ENCODE measurements at regions of chr20 and their contacts with region 1.

Region 1: DNA sequence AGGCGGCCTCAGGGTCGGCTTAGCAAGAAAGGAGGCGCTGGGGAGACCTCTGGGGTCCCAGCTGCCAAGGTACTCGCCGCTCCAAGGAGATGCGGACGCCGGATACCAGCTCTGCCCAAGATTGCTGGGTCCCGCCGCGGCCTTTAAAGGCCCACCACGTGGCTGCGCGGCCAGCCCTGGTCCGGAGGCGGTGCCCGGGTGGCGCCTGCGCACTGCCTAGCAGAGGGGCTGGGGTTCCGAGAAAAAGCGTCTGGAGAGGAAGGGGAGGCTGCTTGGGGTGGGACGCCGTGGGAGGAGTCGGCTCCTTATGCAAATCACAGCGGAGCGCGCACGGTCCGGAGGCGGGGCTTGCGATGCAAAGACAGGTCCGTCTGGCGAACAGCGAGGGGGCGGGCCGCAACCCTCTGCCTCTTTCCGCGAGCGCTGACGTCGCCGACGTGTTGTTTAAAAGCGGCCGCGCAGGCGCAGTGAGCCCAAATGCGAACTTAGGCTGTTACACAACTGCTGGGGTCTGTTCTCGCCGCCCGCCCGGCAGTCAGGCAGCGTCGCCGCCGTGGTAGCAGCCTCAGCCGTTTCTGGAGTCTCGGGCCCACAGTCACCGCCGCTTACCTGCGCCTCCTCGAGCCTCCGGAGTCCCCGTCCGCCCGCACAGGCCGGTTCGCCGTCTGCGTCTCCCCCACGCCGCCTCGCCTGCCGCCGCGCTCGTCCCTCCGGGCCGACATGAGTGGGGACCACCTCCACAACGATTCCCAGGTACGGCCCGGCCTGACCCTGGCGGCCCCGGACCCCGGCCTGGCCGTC is at the start of gene TOP1:
- DNase-seq: peak; percentile 100
- H3K4me3 ChIP-seq: peak within 1 kb of the TSS; percentile 90 to 99
- H3K27ac ChIP-seq: peak within 1 kb of the TSS; percentile 95 to 100
- H3K4me1 ChIP-seq: peaks cover 10 to 34% of the 10 kb centered on the region in 2 donors
- H3K27me3 ChIP-seq: no peaks in the 10 kb centered on the region
- CTCF ChIP-seq: peak in 1 of 3 experiments; percentile 10
- total RNA-seq, gene TOP1: 9.4 TPM

Region 2: GRCh38 chr20:41072190-41072863 is 43.8 kb after region 1 on chr20:
- intact Hi-C with region 1: loop called (anchors 2 kb)
- DNase-seq: peak in 1 of 2 donors; percentile 79
- H3K4me3 ChIP-seq: no peak overlapping the region
- H3K27ac ChIP-seq: peak overlapping the region; percentile 68 to 75
- H3K4me1 ChIP-seq: peaks cover 4 to 40% of the 10 kb centered on the region in 2 donors
- H3K27me3 ChIP-seq: no peaks in the 10 kb centered on the region
- CTCF ChIP-seq: no peak

Region 3: DNA sequence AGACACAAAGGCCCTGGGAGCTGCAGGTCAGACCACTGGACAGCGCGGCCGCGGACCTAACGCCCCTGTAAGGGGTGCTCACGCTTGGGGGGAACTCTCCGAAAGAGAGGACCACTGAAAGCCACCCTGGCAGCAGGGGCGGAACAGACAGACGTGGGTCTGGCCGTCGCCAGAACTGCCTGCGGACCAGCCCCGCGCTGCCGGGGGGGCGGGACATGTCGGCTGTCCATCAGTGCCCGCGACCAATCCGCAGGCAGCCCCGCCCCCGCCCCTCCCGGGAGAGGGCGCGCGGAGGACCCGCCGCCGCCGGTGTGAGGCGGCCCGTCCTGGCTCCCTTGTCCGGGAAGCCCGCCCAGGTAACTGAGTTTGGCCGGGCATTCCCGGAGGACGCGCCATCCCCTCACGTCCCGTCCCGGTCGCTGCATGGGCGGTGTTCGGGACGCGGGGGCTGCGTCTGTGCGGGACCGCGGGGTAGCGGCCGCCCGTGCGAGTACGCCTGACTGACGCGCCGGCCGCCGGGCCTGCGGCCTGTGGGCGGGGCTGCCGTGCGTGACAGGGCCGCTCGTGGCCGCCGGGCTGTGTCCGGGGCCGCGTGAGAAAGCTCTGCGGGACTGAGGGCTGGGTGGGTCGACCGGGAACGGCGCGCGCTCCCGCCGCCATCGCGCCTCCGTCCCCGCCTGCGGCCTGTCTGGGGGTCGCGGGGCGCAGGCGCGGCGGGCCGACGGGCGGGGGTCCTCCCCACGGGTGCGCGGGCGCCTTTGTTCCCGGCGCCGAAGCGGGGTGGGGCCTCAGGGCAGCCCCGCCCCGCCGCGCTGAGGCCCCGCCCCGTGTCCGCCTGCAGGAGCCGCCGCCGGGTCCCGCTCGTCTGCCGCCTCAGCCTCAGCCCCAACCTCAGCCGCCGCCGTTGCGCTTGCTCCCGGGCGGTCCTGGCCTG is 108.4 kb after region 1 on chr20 and contains the start of gene PLCG1:
- intact Hi-C with region 1: loop called (anchors 1 kb)
- DNase-seq: peak; percentile 46 to 94
- H3K4me3 ChIP-seq: peak within 1 kb of the TSS; percentile 86 to 99
- H3K27ac ChIP-seq: peak within 1 kb of the TSS; percentile 98
- H3K4me1 ChIP-seq: peaks cover 0 to 35% of the 10 kb centered on the region in 2 donors
- H3K27me3 ChIP-seq: no peaks in the 10 kb centered on the region
- CTCF ChIP-seq: peak in 1 of 3 experiments; percentile 20
- total RNA-seq, gene PLCG1: 168 TPM